ENCODE measurements at regions of chr16 and their contacts with region 1.

Region 1: DNA sequence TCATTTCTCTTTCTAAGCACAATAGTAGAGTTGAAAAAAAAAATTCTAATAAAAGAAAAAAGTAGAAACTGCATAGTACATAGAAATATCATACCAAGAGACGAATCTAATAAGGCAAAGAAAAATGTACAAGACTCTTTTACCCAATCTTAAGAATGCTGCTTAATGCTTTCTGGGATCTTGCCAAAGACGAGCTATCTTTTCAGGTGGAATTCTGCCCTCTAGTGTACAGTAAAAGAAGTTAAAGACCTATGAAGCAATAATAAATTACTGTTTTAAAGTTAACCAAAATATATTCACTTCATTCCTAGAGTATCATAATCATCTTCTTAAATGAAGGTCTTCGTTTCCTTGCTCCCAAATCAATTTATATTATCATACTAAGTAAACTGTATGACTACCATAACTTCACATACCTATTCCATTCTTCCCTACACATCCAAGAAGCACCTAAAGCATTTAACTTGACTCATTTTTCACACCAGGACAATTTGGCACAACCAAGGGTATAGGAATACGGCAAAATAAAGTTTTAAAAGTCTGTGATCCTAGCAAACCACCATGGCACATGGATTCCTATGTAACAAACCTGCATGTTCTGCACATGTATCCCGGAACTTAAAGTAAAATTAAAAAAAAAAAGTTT is 47.7 kb downstream of the CFDP1 start:
- DNase-seq: peak; percentile 66
- ATAC-seq: no peak; the same call in 1 of the 2 replicates
- H3K4me3 ChIP-seq: no peak overlapping the region
- H3K27ac ChIP-seq: no peak overlapping the region
- H3K4me1 ChIP-seq: peaks cover 3 to 4% of the 10 kb centered on the region in 2 experiments; a peak in 1 of 4 replicates
- H3K27me3 ChIP-seq: no peaks in the 10 kb centered on the region
- CTCF ChIP-seq: peak; percentile 30 to 91 (median 74); a peak in 5 of 6 replicates
- POLR2A ChIP-seq: no peak
- RAD21 ChIP-seq: peak; percentile 97

Region 2: DNA sequence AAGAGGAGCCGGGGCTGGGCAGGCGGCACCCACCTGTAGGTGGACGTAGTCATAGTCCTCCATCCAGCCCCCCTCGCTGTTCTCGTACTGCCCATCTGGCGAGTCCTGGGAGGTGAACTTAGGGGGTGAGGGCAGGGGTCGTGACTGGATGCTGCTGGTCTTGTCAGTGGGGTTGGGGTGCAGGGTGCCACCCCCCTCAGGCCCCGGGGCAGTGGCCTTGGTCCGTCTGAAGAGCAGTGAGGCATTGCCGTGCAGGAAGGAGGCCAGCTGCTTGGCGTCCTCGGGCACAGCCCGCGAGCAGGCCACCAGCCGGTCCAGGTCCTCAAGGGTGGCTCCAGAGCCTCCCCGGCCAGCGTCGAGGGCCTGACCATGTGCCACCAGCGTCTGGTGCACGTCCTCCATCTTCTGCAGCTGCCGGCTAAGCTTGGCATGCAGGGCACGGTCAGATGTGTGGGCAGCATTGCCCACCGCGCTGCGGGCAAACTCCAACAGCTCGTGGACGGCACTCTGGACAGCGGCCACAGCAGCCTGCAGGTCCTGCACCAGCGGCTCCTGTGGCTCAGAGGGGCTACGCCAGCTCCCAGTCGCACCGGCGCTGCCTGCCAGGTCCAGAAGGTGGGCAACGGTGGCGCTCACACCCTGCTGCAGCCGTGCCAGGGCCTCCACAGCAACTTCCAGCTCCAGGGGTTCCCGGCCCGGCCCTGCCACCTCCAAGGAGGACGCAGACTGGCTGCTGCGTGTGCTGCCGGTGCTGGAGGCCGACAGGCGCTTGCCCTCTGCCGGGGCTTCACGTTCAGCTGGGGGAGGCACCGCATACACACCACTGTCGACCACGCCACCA is 150.6 kb before region 1 on chr16:
- CTCF ChIA-PET with region 1: interaction called, 41 read pairs
- POLR2A ChIA-PET with region 1: no interaction called
- RAD21 ChIA-PET with region 1: interaction called, 7 to 8 read pairs
- intact Hi-C with region 1: loop called (anchors 1 kb)
- DNase-seq: no peak
- ATAC-seq: no peak
- H3K4me3 ChIP-seq: no peak overlapping the region
- H3K27ac ChIP-seq: peak overlapping the region; percentile 72
- H3K4me1 ChIP-seq: peaks cover 20 to 33% of the 10 kb centered on the region in 2 experiments
- H3K27me3 ChIP-seq: no peaks in the 10 kb centered on the region
- CTCF ChIP-seq: no peak
- POLR2A ChIP-seq: no peak
- RAD21 ChIP-seq: no peak

Region 3: DNA sequence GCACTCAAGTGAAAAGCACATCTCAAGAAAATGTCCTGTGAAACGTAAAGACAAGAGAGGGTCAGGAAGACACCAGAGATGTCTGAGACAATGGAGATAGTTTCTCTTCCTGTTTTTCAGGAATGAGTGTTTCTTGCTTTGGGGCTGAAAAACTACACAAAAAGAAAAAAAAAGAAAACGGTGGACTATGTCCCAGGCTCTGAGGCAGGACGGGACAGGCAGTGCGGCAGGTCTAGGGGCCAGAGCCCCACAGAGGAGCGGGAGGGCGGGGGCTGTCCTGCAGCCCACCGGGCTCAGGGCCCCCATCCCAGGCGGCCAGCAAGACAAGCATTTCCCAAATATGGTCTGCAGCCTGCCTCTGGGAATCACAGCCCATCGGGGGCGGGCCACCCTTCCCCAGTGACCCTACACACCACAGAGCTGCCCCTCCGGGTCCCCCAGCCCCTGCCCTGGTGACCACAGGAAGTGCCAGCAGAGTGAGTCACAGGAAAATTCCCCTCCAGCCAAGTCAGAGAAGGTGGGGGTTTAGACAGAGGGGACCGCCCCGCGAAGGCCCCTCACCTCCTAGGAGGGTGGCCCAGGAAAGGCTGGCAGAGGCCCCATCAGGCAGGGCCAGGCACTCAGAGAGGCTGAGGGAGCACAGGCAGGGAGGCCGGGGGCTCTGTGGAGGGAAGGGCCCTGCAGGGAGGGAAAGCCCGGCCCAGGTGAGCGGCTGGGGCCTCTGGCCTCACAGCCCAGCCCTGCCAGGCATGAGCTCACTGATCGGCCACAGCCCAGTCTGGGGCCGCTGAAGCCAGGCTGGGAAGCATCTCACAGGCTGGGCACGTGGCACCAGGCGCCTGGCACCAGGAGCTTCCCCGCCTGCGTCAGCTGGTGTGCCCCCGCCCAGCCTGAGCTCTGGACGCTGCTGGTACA is 140.5 kb before region 1 on chr16:
- CTCF ChIA-PET with region 1: interaction called, 5 read pairs
- POLR2A ChIA-PET with region 1: no interaction called
- RAD21 ChIA-PET with region 1: interaction called, 3 to 4 read pairs
- intact Hi-C with region 1: loop called (anchors 1 kb)
- DNase-seq: no peak
- ATAC-seq: peak; percentile 77
- H3K4me3 ChIP-seq: peak overlapping the region; percentile 7 to 30; a peak in 2 of 4 replicates
- H3K27ac ChIP-seq: peak overlapping the region; percentile 97
- H3K4me1 ChIP-seq: peaks cover 68 to 69% of the 10 kb centered on the region in 2 experiments
- H3K27me3 ChIP-seq: no peaks in the 10 kb centered on the region
- CTCF ChIP-seq: no peak
- POLR2A ChIP-seq: no peak
- RAD21 ChIP-seq: no peak

Region 4: GRCh38 chr16:75372236-75372856 is 13.3 kb before region 1 on chr16:
- CTCF ChIA-PET with region 1: interaction called, 10 read pairs
- POLR2A ChIA-PET with region 1: no interaction called
- RAD21 ChIA-PET with region 1: no interaction called
- intact Hi-C with region 1: no loop called
- DNase-seq: no peak
- ATAC-seq: no peak
- H3K4me3 ChIP-seq: no peak overlapping the region
- H3K27ac ChIP-seq: no peak overlapping the region
- H3K4me1 ChIP-seq: peaks cover 0 to 8% of the 10 kb centered on the region in 2 experiments; a peak in 1 of 4 replicates
- H3K27me3 ChIP-seq: no peaks in the 10 kb centered on the region
- CTCF ChIP-seq: no peak
- POLR2A ChIP-seq: no peak
- RAD21 ChIP-seq: no peak